Pancreas (tissue), 10 donors: ENCODE measurements at regions of chr7 and their contacts with region 1.

Region 1: GRCh38 chr7:116601426-116601825 is 70.6 kb upstream of the MET start:
- DNase-seq: no peak
- ATAC-seq: no peak
- H3K4me3 ChIP-seq: no peak overlapping the region
- H3K27ac ChIP-seq: no peak overlapping the region
- H3K4me1 ChIP-seq: no peaks in the 10 kb centered on the region
- H3K27me3 ChIP-seq: no peaks in the 10 kb centered on the region
- CTCF ChIP-seq: no peak

Region 2: GRCh38 chr7:116809636-116810266 is 208.3 kb after region 1 on chr7:
- intact Hi-C with region 1: loop called in 1 of 3 experiments (anchors 5 kb)
- DNase-seq: peak in 3 of 6 donors; percentile 32 to 39 (median 37)
- ATAC-seq: peak; percentile 88 to 96 (median 94)
- H3K4me3 ChIP-seq: no peak overlapping the region
- H3K27ac ChIP-seq: peak overlapping the region; percentile 30 to 84 (median 66)
- H3K4me1 ChIP-seq: peaks cover 23 to 27% (median 26%) of the 10 kb centered on the region in 3 donors
- H3K27me3 ChIP-seq: no peaks in the 10 kb centered on the region
- CTCF ChIP-seq: peak in 3 of 4 donors; percentile 36 to 57 (median 48)